ENCODE measurements at regions of chr17 and their contacts with region 1.

Region 1: DNA sequence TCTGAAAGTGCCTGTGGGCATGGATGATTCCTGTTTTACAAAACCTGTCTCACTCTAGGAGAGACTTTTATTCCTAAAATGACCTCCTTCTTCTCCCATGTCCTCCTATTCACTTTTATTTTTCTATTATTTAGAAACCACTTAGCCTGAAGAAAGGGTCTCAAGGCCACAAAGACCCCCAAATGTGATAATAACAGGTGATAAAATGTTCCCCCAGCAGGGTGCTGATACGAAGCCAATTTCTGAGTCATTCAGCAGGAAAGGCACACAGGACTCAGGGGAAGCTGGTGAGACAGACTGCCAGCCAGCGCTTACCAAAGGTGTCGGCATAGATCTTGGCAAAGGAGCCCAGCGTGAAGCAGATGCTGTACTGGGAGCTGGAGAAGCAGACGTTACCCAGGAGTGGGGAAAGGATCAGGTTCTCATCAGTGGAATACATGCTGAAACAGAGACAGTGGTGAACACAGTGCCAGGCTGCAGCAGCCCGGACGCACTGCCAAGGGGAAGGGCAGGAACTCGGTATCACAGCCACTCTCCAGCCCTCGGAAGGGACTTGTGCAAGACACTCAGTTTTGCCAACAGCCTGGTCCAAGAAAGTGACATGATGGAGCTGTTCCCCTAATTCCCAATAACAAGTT is 24.6 kb downstream of the HIGD1B start:
- DNase-seq: no peak
- H3K4me3 ChIP-seq: no peak overlapping the region
- H3K27ac ChIP-seq: no peak overlapping the region
- H3K4me1 ChIP-seq: no peaks in the 10 kb centered on the region
- H3K27me3 ChIP-seq: no peaks in the 10 kb centered on the region
- CTCF ChIP-seq: no peak
- POLR2A ChIP-seq: no peak

Region 2: GRCh38 chr17:44774271-44775135 is 97.7 kb before region 1 on chr17:
- intact Hi-C with region 1: loop called (anchors 5 kb)
- DNase-seq: peak; percentile 83 to 89
- H3K4me3 ChIP-seq: peak overlapping the region; percentile 39 to 73 (median 62)
- H3K27ac ChIP-seq: no peak overlapping the region
- H3K4me1 ChIP-seq: no peaks in the 10 kb centered on the region
- H3K27me3 ChIP-seq: peaks cover 0 to 6% of the 10 kb centered on the region in 2 donors
- CTCF ChIP-seq: peak; percentile 95 to 98 (median 98)
- POLR2A ChIP-seq: no peak

Measured in breast epithelium (tissue), 4 donors.